Naive thymus-derived CD4-positive, alpha-beta T cell (primary cell): ENCODE measurements at regions of chrX and their contacts with region 1.

Region 1: GRCh38 chrX:1323315-1323714 is 13.3 kb upstream of the IL3RA start:
- DNase-seq: peak; percentile 20 to 50 (median 40)
- ATAC-seq: peak; percentile 77
- H3K4me3 ChIP-seq: no peak overlapping the region
- H3K4me3 Mint-ChIP-seq: peak overlapping the region in 2 of 10 donors; percentile 41 to 50
- H3K27ac ChIP-seq: no peak overlapping the region
- H3K27ac Mint-ChIP-seq: peak overlapping the region in 2 of 9 donors; percentile 44 to 76
- H3K4me1 ChIP-seq: no peaks in the 10 kb centered on the region
- H3K4me1 Mint-ChIP-seq: peaks cover 0 to 19% (median 4%) of the 10 kb centered on the region in 7 donors
- H3K27me3 ChIP-seq: no peaks in the 10 kb centered on the region
- H3K27me3 Mint-ChIP-seq: peaks cover 0 to 16% (median 4%) of the 10 kb centered on the region in 5 donors

Region 2: DNA sequence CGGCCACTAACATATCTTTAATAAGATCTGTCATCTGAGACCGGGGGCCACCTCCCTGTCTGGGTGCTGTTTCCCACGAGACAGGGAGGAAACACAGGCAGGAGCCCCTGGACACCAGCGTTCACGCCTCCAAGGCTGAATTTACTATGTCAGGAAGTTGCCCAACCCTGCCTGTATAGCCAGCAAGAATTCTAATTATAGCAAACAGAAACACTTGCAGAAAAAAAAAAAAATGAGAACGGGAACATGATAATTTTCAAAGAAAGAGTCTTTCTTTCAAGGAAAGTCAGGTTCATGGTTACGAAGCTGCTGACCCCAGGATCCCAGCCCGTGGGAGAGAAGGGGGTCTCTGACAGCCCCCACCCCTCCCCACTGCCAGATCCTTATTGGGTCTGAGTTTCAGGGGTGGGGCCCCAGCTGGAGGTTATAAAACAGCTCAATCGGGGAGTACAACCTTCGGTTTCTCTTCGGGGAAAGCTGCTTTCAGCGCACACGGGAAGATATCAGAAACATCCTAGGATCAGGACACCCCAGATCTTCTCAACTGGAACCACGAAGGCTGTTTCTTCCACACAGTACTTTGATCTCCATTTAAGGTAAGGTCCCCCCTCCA is 13.1 kb after region 1 on chrX and contains the start of gene IL3RA:
- CTCF ChIA-PET with region 1: no interaction called
- POLR2A ChIA-PET with region 1: no interaction called
- intact Hi-C with region 1: loop called in 1 of 2 experiments (anchors 2 kb)
- DNase-seq: peak in 4 of 9 donors; percentile 7 to 14 (median 12)
- ATAC-seq: peak; percentile 79
- H3K4me3 ChIP-seq: peak within 1 kb of the TSS; percentile 38
- H3K4me3 Mint-ChIP-seq: peak within 1 kb of the TSS; percentile 77 to 97 (median 84)
- H3K27ac ChIP-seq: no peak within 1 kb of the TSS
- H3K27ac Mint-ChIP-seq: peak within 1 kb of the TSS in 8 of 9 donors; percentile 0 to 89 (median 42)
- H3K4me1 ChIP-seq: no peaks in the 10 kb centered on the region
- H3K4me1 Mint-ChIP-seq: peaks cover 6 to 32% (median 9%) of the 10 kb centered on the region in 7 donors
- H3K27me3 ChIP-seq: no peaks in the 10 kb centered on the region
- H3K27me3 Mint-ChIP-seq: peaks cover 0 to 4% (median 3%) of the 10 kb centered on the region in 5 donors
- total RNA-seq, gene IL3RA: 7.9 to 23.7 (median 10.5) TPM in 3 of 5 experiments, not detected in the others

Region 3: DNA sequence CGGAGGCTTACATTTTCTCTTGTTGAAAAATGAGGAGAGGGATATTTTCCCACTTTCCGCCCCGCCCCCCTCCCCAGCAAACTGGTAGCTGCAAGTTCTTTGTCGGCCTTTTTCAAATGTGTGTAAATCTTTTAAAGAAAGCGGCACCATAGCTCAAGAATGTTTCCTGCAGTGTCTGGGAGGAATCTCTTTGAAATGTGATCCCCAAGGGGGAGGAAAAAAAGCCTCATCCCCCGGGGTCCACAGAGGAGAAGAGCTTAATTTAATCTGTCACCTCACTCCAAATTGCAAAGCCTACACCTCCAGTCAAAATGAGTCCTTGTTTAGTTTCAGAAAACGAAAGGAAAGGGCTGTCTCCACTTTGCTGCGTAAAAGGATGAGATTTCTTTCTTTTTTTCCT is 326.3 kb after region 1 on chrX:
- CTCF ChIA-PET with region 1: no interaction called
- POLR2A ChIA-PET with region 1: no interaction called
- intact Hi-C with region 1: loop called in 1 of 2 experiments (anchors 1 kb)
- DNase-seq: no peak
- ATAC-seq: no peak
- H3K4me3 ChIP-seq: no peak overlapping the region
- H3K4me3 Mint-ChIP-seq: no peak overlapping the region
- H3K27ac ChIP-seq: no peak overlapping the region
- H3K27ac Mint-ChIP-seq: no peak overlapping the region
- H3K4me1 ChIP-seq: no peaks in the 10 kb centered on the region
- H3K4me1 Mint-ChIP-seq: peaks cover 0 to 9% (median 6%) of the 10 kb centered on the region in 7 donors
- H3K27me3 ChIP-seq: no peaks in the 10 kb centered on the region
- H3K27me3 Mint-ChIP-seq: peaks cover 0 to 8% (median 3%) of the 10 kb centered on the region in 5 donors

Region 4: GRCh38 chrX:2147928-2148327 is 824.6 kb after region 1 on chrX:
- CTCF ChIA-PET with region 1: no interaction called
- POLR2A ChIA-PET with region 1: no interaction called
- intact Hi-C with region 1: no loop called
- DNase-seq: no peak
- ATAC-seq: no peak
- H3K4me3 ChIP-seq: no peak overlapping the region
- H3K4me3 Mint-ChIP-seq: no peak overlapping the region
- H3K27ac ChIP-seq: no peak overlapping the region
- H3K27ac Mint-ChIP-seq: no peak overlapping the region
- H3K4me1 ChIP-seq: no peaks in the 10 kb centered on the region
- H3K4me1 Mint-ChIP-seq: no peaks in the 10 kb centered on the region
- H3K27me3 ChIP-seq: no peaks in the 10 kb centered on the region
- H3K27me3 Mint-ChIP-seq: no peaks in the 10 kb centered on the region

Region 5: GRCh38 chrX:2589186-2590030 is 1266.1 kb after region 1 on chrX:
- CTCF ChIA-PET with region 1: no interaction called
- POLR2A ChIA-PET with region 1: no interaction called
- intact Hi-C with region 1: loop called in 1 of 2 experiments (anchors 5 kb)
- DNase-seq: no peak
- ATAC-seq: no peak
- H3K4me3 ChIP-seq: no peak overlapping the region
- H3K4me3 Mint-ChIP-seq: no peak overlapping the region
- H3K27ac ChIP-seq: no peak overlapping the region
- H3K27ac Mint-ChIP-seq: no peak overlapping the region
- H3K4me1 ChIP-seq: no peaks in the 10 kb centered on the region
- H3K4me1 Mint-ChIP-seq: peaks cover 0 to 18% (median 15%) of the 10 kb centered on the region in 7 donors
- H3K27me3 ChIP-seq: no peaks in the 10 kb centered on the region
- H3K27me3 Mint-ChIP-seq: peaks cover 4 to 15% (median 6%) of the 10 kb centered on the region in 5 donors